Motor neuron (in vitro differentiated cells): ENCODE measurements at regions of chr20 and their contacts with region 1.

Region 1: DNA sequence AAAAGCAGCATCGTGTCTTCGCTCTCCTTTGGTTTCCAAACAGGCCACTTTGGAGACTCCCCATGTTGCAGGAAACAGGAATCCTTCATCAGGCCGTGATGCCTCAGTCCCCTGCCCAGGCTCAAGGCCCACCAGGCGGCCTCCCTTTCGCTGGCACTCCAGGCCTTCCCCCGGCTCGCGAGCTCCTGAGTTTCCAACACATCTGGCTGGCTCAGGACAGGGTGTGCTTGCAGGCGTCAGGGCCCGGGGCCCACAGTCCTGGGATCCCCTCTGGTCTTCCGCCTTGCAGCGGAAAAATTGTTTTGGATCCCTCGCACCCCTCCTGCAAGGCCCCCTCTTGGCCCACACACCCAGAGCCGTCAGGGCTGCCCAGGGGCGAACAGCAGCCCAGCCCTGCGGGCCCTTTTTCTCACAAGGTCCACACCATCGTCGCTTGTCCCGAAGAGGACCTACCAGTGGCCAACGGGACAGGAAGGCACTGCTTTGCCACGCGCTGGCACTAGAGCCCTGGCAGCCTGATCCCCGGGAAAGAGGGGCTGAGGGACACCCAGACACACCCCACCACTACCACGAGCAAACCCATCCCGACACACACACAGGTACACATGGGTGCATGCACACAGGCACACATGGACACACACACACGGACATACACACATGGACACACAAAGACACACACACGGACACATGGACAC is 1930.9 kb upstream of the DEFB115 start:
- ATAC-seq: no peak
- H3K4me3 ChIP-seq: no peak overlapping the region
- H3K27ac ChIP-seq: no peak overlapping the region
- H3K4me1 ChIP-seq: no peaks in the 10 kb centered on the region

Region 2: GRCh38 chr20:30376767-30377666 is 1050.5 kb after region 1 on chr20:
- in situ Hi-C with region 1: loop called in 1 of 9 experiments (anchors 25 kb)
- ATAC-seq: peak; percentile 95 to 99 (median 98)
- H3K4me3 ChIP-seq: peak overlapping the region; percentile 77 to 94 (median 88)
- H3K27ac ChIP-seq: peak overlapping the region; percentile 81 to 86
- H3K4me1 ChIP-seq: peaks cover 0 to 4% of the 10 kb centered on the region in 2 donors

Region 3: DNA sequence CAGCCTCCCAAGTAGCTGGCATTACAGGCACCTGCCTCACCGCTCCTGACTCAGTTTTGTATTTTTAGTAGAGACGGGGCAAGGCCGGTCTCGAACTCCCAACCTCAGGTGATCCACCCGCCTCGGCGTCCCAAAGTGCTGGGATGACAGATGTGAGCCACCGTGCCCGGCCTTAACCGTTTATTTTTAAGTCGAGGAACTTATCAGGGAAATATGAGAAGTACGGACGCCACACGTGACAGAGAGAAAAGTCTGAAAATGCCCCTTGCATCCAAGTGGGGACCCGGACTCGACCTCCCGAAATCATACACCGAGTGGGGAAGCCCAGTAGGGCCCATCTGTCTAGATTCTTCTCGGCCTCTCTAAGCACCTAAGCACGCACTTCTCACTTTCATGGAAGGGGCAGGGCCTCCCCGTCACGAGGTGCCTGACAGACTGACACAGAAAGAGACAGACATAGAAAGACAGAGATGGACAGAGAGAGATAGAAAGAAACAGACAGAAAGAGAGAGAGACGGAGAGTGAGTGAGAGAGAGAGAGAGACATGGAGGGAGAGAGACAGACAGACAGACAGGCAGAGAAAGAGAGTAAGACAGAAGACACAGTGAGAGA is 1174.4 kb after region 1 on chr20:
- in situ Hi-C with region 1: loop called in 1 of 9 experiments (anchors 25 kb)
- ATAC-seq: peak in 2 of 8 experiments; percentile 17 to 21
- H3K4me3 ChIP-seq: peak overlapping the region in 1 of 5 donors; percentile 24
- H3K27ac ChIP-seq: no peak overlapping the region
- H3K4me1 ChIP-seq: peaks cover 3 to 23% of the 10 kb centered on the region in 2 donors